Transverse colon (tissue), 4 donors: ENCODE measurements at regions of chr3 and their contacts with region 1.

Region 1: DNA sequence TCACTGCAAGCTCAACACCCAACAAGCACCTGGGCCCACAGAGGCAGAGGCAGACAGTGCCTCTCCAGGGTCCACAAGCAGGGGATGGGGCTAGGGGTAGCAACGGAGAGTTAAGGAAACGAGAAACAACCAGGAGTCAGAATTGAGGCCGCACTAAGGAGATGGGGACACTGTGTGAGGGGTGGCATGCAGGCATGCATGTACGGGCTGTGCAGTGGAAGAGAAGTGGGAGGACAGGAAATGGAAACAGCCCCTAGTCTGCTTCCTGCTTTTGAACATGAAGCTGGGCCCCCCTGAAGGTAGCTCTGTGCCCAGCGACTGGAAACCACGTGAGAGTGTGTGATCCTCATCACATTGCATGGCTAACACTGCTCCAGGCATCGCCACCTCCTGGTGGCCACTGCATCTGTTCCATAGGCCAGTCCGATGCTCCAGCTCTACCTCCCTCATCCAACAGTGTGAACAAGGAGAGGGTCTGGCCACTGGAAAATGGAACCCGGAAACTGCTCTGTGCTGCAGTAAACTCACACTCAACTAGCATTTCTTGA is 44.0 kb downstream of the XXYLT1 start:
- DNase-seq: no peak
- H3K4me3 ChIP-seq: no peak overlapping the region
- H3K27ac ChIP-seq: no peak overlapping the region
- H3K4me1 ChIP-seq: peaks cover 0 to 24% (median 19%) of the 10 kb centered on the region in 4 donors
- H3K27me3 ChIP-seq: no peaks in the 10 kb centered on the region
- CTCF ChIP-seq: peak in 1 of 5 experiments; percentile 10
- EP300 ChIP-seq: no peak
- POLR2A ChIP-seq: no peak

Region 2: GRCh38 chr3:195001961-195002861 is 224.8 kb before region 1 on chr3:
- in situ Hi-C with region 1: loop called in 1 of 4 experiments (anchors 25 kb)
- intact Hi-C with region 1: no loop called
- DNase-seq: peak; percentile 78
- H3K4me3 ChIP-seq: no peak overlapping the region
- H3K27ac ChIP-seq: no peak overlapping the region
- H3K4me1 ChIP-seq: peaks cover 0 to 4% (median 2%) of the 10 kb centered on the region in 4 donors
- H3K27me3 ChIP-seq: peaks cover 7% of the 10 kb centered on the region
- CTCF ChIP-seq: peak; percentile 37 to 66 (median 46)
- EP300 ChIP-seq: no peak
- POLR2A ChIP-seq: no peak

Region 3: GRCh38 chr3:195154793-195155535 is 72.0 kb before region 1 on chr3:
- in situ Hi-C with region 1: no loop called
- intact Hi-C with region 1: loop called (anchors 2 kb)
- DNase-seq: peak; percentile 82
- H3K4me3 ChIP-seq: peak overlapping the region in 1 of 4 donors; percentile 3
- H3K27ac ChIP-seq: peak overlapping the region; percentile 80 to 89 (median 85)
- H3K4me1 ChIP-seq: peaks cover 44 to 72% (median 52%) of the 10 kb centered on the region in 4 donors
- H3K27me3 ChIP-seq: no peaks in the 10 kb centered on the region
- CTCF ChIP-seq: no peak
- EP300 ChIP-seq: no peak
- POLR2A ChIP-seq: no peak